ENCODE measurements at regions of chr7 and their contacts with region 1.

Region 1: DNA sequence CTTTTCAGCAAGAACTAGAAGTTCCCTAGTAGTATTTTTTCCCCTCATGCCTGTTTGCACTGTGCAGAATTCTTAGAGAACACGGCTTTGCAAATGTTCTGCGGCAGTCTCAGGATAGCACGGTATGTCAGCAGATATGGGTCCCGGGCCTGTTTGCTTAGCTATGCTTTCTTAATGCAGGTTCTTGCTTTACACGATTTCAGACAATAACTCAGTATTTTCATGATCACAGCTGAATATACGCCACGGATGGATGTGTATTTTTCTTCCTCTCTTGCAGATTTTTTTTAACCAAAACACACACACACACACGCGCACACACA is 137.3 kb downstream of the HECW1 start:
- DNase-seq: no peak
- H3K4me3 ChIP-seq: no peak overlapping the region
- H3K27ac ChIP-seq: no peak overlapping the region
- H3K4me1 ChIP-seq: no peaks in the 10 kb centered on the region
- H3K27me3 ChIP-seq: no peaks in the 10 kb centered on the region
- CTCF ChIP-seq: no peak
- POLR2A ChIP-seq: no peak

Region 2: GRCh38 chr7:42960762-42961161 is 289.0 kb before region 1 on chr7:
- intact Hi-C with region 1: no loop called
- DNase-seq: no peak
- H3K4me3 ChIP-seq: no peak overlapping the region
- H3K27ac ChIP-seq: no peak overlapping the region
- H3K4me1 ChIP-seq: peaks cover 0 to 8% of the 10 kb centered on the region in 2 donors
- H3K27me3 ChIP-seq: no peaks in the 10 kb centered on the region
- CTCF ChIP-seq: no peak
- POLR2A ChIP-seq: no peak

Region 3: GRCh38 chr7:43108255-43109011 is 141.4 kb before region 1 on chr7:
- intact Hi-C with region 1: loop called in 1 of 2 experiments (anchors 10 kb)
- DNase-seq: peak; percentile 72 to 88 (median 78)
- H3K4me3 ChIP-seq: no peak overlapping the region
- H3K27ac ChIP-seq: no peak overlapping the region
- H3K4me1 ChIP-seq: peaks cover 10% of the 10 kb centered on the region in 2 donors
- H3K27me3 ChIP-seq: peaks cover 33% of the 10 kb centered on the region
- CTCF ChIP-seq: peak; percentile 66 to 91 (median 78)
- POLR2A ChIP-seq: no peak

Region 4: GRCh38 chr7:43164757-43165156 is 85.0 kb before region 1 on chr7:
- intact Hi-C with region 1: no loop called
- DNase-seq: peak; percentile 30 to 69 (median 66)
- H3K4me3 ChIP-seq: no peak overlapping the region
- H3K27ac ChIP-seq: peak overlapping the region in 3 of 5 donors; percentile 2 to 76 (median 44)
- H3K4me1 ChIP-seq: peaks cover 3 to 10% of the 10 kb centered on the region in 2 donors
- H3K27me3 ChIP-seq: no peaks in the 10 kb centered on the region
- CTCF ChIP-seq: no peak
- POLR2A ChIP-seq: no peak

Region 5: GRCh38 chr7:43353902-43354301 is 104.1 kb after region 1 on chr7:
- intact Hi-C with region 1: no loop called
- DNase-seq: no peak
- H3K4me3 ChIP-seq: no peak overlapping the region
- H3K27ac ChIP-seq: no peak overlapping the region
- H3K4me1 ChIP-seq: no peaks in the 10 kb centered on the region
- H3K27me3 ChIP-seq: no peaks in the 10 kb centered on the region
- CTCF ChIP-seq: no peak
- POLR2A ChIP-seq: no peak

Region 6: GRCh38 chr7:43364391-43364790 is 114.6 kb after region 1 on chr7:
- intact Hi-C with region 1: no loop called
- DNase-seq: no peak
- H3K4me3 ChIP-seq: no peak overlapping the region
- H3K27ac ChIP-seq: no peak overlapping the region
- H3K4me1 ChIP-seq: no peaks in the 10 kb centered on the region
- H3K27me3 ChIP-seq: no peaks in the 10 kb centered on the region
- CTCF ChIP-seq: no peak
- POLR2A ChIP-seq: no peak